ENCODE measurements at regions of chr11 and their contacts with region 1.

Region 1: DNA sequence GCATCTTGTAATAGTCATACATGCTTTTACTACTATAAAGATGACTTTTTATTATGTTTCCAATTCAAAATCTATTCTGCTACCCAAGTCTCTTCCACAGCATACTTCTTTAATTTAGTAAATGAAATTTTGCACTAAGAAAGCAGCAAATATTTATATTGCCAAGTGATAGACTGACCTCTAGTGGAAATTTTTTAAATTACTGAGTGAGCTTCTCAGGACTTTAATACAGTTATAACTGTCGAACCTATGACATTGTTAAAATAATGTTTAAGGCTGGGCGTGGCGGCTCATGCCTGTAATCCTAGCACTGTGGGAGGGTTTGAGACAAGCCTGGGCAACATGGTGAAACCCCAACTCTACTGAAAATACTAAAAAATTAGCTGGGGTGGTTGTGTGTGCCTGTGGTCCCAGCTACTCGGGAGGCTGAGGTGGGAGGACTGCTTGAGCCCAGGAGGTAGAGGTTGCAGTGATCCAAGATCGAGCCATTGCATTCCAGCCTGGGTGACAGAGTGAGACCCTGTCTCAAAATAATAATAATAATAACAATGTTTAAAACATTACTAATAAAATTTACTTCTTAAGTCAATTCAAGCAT is 27.3 kb downstream of the STK33 start:
- DNase-seq: no peak
- H3K4me3 ChIP-seq: no peak overlapping the region
- H3K27ac ChIP-seq: no peak overlapping the region
- H3K4me1 ChIP-seq: no peaks in the 10 kb centered on the region
- H3K27me3 ChIP-seq: no peaks in the 10 kb centered on the region
- CTCF ChIP-seq: peak in 2 of 3 experiments; percentile 38 to 39; a peak in 2 of 4 replicates
- EP300 ChIP-seq: no peak
- POLR2A ChIP-seq: no peak
- RAD21 ChIP-seq: peak; percentile 63 to 76

Region 2: GRCh38 chr11:8192016-8192895 is 374.5 kb before region 1 on chr11:
- CTCF ChIA-PET with region 1: interaction called, 17 read pairs
- POLR2A ChIA-PET with region 1: no interaction called
- DNase-seq: peak in 1 of 2 experiments; percentile 88
- H3K4me3 ChIP-seq: no peak overlapping the region
- H3K27ac ChIP-seq: no peak overlapping the region
- H3K4me1 ChIP-seq: peaks cover 0 to 3% (median 0%) of the 10 kb centered on the region in 4 experiments; a peak in 2 of 7 replicates
- H3K27me3 ChIP-seq: peaks cover 0 to 10% (median under 1%) of the 10 kb centered on the region in 4 experiments; a peak in 1 of 7 replicates
- CTCF ChIP-seq: peak; percentile 83 to 98 (median 89)
- EP300 ChIP-seq: no peak
- POLR2A ChIP-seq: no peak
- RAD21 ChIP-seq: peak; percentile 89

Region 3: DNA sequence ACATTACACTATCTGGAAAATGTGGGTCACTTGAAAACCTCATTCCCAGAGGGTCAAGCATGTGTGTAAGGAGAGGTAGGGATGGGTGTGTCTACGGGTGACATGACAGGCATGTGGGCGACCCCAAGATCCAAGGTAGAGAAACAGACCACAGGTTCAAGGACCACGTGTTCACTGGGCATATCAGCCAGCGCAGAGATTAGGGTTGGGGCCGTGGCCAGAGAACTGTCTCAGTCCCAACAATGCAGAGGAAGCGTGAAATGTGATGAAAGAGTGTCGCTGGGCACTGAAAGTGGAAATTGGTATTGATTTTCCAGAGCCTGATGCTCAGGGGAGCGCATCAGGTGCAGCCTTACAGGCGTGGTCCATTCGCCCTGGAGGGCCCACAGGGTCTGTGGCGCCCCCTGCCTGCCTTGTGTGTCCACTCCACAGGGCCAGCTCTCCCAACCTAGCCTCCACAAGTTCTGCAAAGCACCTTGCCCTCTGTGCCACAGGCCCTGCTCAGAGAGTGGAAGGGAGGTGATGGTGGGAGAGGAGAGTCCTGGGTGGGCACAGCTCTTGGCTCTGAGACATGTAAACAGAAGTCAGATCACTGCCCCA is 248.3 kb before region 1 on chr11:
- CTCF ChIA-PET with region 1: interaction called, 13 read pairs
- POLR2A ChIA-PET with region 1: no interaction called
- DNase-seq: peak in 1 of 2 experiments; percentile 81
- H3K4me3 ChIP-seq: no peak overlapping the region
- H3K27ac ChIP-seq: no peak overlapping the region
- H3K4me1 ChIP-seq: no peaks in the 10 kb centered on the region
- H3K27me3 ChIP-seq: peaks cover 0 to 3% (median 0%) of the 10 kb centered on the region in 4 experiments; a peak in 2 of 7 replicates
- CTCF ChIP-seq: peak; percentile 90 to 92 (median 92)
- EP300 ChIP-seq: no peak
- POLR2A ChIP-seq: no peak
- RAD21 ChIP-seq: peak; percentile 90

Region 4: DNA sequence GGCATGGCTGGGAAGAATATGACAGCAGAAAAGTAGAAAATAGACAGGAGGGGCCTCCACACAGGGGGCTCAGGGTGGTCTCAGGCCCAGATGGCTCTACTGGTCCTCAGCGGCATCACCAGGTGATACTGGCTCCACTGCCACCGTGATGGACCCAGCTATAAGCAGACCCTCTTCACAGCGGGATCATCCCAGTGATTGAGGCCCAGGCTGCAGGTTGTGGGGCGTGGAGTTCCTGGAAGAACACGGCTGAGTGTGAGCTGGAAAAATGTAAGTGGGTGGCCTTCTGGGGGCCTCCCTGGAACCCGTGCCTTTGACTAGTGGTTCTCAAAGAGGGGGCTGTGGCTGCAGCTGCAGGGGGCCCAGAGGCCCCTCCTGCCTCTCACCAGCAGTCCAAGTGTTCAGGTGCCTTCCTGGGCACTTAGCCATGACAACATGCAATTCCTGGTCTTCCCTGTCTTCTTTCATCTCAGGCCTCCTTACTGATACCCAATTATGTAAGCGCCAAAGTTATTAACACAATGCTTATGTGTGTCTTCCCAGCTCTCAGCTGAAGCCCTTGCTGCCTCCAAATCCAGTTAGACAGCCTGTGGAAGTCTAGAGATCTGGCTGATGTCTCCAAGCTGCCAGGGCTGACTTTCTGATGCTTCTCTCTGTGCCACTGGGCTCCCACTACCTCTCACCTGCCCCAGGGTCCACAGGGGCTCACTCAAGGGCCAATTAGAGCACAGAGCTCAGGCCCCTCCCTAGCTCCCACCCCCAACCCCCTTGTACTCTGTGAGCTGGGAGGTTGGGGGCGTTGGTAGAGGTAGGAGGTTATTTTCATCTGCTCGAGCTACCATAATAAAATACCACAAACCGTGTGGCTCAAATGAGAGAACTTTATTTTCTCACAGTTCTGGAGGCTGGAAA is 192.9 kb before region 1 on chr11:
- CTCF ChIA-PET with region 1: interaction called, 13 read pairs
- POLR2A ChIA-PET with region 1: no interaction called
- DNase-seq: no peak
- H3K4me3 ChIP-seq: no peak overlapping the region
- H3K27ac ChIP-seq: no peak overlapping the region
- H3K4me1 ChIP-seq: peaks cover 0 to 2% (median 0%) of the 10 kb centered on the region in 4 experiments; a peak in 1 of 7 replicates
- H3K27me3 ChIP-seq: no peaks in the 10 kb centered on the region
- CTCF ChIP-seq: no peak
- EP300 ChIP-seq: no peak
- POLR2A ChIP-seq: no peak
- RAD21 ChIP-seq: no peak

Region 5: GRCh38 chr11:8389029-8389996 is 177.4 kb before region 1 on chr11:
- CTCF ChIA-PET with region 1: interaction called, 19 read pairs
- POLR2A ChIA-PET with region 1: no interaction called
- DNase-seq: no peak
- H3K4me3 ChIP-seq: no peak overlapping the region
- H3K27ac ChIP-seq: no peak overlapping the region
- H3K4me1 ChIP-seq: peaks cover 0 to 10% (median 2%) of the 10 kb centered on the region in 4 experiments; a peak in 5 of 7 replicates
- H3K27me3 ChIP-seq: no peaks in the 10 kb centered on the region
- CTCF ChIP-seq: no peak
- EP300 ChIP-seq: no peak
- POLR2A ChIP-seq: no peak
- RAD21 ChIP-seq: no peak

Measured in H1 (cell line).